Caco-2 (cell line): ENCODE measurements at regions of chr1 and their contacts with region 1.

Region 1: GRCh38 chr1:55284852-55285251 is 69.7 kb upstream of the USP24 start:
- DNase-seq: peak in 1 of 2 experiments; percentile 53
- H3K4me3 ChIP-seq: no peak overlapping the region
- H3K4me3 Mint-ChIP-seq: no peak overlapping the region
- H3K27ac Mint-ChIP-seq: no peak overlapping the region
- H3K4me1 ChIP-seq: no peaks in the 10 kb centered on the region
- H3K4me1 Mint-ChIP-seq: no peaks in the 10 kb centered on the region
- H3K27me3 ChIP-seq: no peaks in the 10 kb centered on the region
- H3K27me3 Mint-ChIP-seq: no peaks in the 10 kb centered on the region
- CTCF ChIP-seq: peak; percentile 40 to 54

Region 2: DNA sequence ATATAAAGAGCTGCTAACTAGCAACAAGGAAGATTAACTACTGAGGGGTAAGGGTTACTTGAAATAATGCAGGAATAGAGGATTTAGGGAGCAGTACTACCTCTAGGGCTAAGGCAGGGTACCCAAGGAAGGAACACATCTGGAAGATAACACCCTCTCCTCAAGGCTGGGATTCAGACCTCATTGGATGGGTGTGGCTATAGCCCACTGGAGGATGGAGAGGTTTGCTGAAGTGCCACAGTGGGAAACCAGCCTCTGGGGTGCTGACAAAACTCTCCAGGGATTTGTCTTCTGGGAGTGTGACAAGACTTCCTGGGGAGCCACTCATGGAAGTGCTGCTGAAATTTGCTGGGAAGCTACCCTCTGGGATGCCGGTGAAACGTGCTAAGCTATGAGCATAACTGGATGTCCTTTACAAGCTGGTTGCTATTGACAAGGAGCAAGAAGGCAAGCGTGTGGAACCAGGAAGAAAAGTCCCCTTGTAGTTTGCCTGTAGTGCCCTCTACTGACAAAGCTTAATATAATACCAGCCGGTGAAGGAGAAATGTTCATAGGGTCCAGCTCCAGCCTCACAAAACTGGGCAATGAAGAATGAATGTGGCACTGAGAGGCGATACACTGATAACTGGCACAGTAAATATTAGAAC is 53.1 kb after region 1 on chr1:
- CTCF ChIA-PET with region 1: no interaction called
- POLR2A ChIA-PET with region 1: no interaction called
- intact Hi-C with region 1: loop called (anchors 1 kb)
- DNase-seq: peak in 1 of 2 experiments; percentile 25
- H3K4me3 ChIP-seq: no peak overlapping the region
- H3K4me3 Mint-ChIP-seq: no peak overlapping the region
- H3K27ac Mint-ChIP-seq: no peak overlapping the region
- H3K4me1 ChIP-seq: no peaks in the 10 kb centered on the region
- H3K4me1 Mint-ChIP-seq: no peaks in the 10 kb centered on the region
- H3K27me3 ChIP-seq: no peaks in the 10 kb centered on the region
- H3K27me3 Mint-ChIP-seq: no peaks in the 10 kb centered on the region
- CTCF ChIP-seq: peak in 1 of 2 experiments; percentile 21